ENCODE measurements at regions of chr6 and their contacts with region 1.

Region 1: GRCh38 chr6:13767121-13767808 is 47.1 kb downstream of the MCUR1 start:
- DNase-seq: peak; percentile 43 to 66
- ATAC-seq: peak; percentile 86 to 92
- H3K4me3 ChIP-seq: peak overlapping the region; percentile 20 to 39 (median 25)
- H3K27ac ChIP-seq: peak overlapping the region in 2 of 4 donors; percentile 8 to 60
- H3K4me1 ChIP-seq: peaks cover 3 to 7% of the 10 kb centered on the region in 2 donors
- H3K27me3 ChIP-seq: no peaks in the 10 kb centered on the region
- CTCF ChIP-seq: peak in 1 of 5 experiments; percentile 11
- POLR2A ChIP-seq: no peak

Region 2: DNA sequence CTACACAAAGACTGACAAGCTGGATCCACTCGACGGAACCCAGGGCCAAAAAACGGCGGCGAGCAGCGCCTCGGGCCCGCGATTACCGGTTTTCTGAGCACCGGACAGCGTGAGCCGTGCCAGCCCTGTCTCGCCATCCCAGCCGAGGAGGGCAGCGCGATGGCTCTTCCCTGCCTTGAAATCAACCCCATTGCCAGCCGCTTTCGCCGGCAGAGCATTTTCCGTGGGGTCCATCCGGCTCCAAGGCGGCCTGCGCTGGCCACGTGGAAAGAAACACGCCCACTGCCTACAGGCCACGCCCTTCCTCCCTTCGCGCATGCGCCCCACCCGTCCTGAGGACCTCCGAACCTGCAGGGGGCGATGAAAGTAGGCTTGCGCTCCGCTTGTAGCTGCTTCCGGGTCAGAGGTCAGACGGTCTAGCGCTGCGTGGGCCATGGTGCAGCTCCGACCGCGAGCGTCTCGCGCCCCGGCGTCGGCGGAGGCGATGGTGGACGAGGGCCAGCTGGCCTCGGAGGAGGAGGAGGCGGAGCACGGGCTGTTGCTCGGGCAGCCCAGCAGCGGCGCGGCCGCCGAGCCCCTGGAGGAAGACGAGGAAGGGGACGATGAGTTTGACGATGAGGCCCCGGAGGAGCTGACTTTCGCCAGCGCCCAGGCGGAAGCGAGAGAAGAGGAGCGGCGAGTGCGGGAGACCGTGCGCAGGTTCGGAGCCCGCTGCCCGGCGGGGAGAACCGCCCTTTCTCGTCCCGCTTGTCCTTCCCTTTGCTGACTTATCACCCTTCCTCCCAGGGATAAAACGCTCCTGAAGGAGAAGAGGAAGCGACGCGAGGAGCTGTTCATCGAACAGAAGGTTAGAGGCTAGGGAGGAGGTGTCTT is 152.1 kb before region 1 on chr6 and contains the start of gene NOL7:
- in situ Hi-C with region 1: loop called in 1 of 4 experiments (anchors 10 kb)
- intact Hi-C with region 1: loop called (anchors 1 kb)
- DNase-seq: peak; percentile 97 to 98
- ATAC-seq: peak; percentile 95 to 97
- H3K4me3 ChIP-seq: peak within 1 kb of the TSS; percentile 68 to 95 (median 78)
- H3K27ac ChIP-seq: peak within 1 kb of the TSS; percentile 84 to 91 (median 88)
- H3K4me1 ChIP-seq: peaks cover 21 to 34% of the 10 kb centered on the region in 2 donors
- H3K27me3 ChIP-seq: no peaks in the 10 kb centered on the region
- CTCF ChIP-seq: peak; percentile 88 to 93 (median 92)
- POLR2A ChIP-seq: peak; percentile 67 to 73
- total RNA-seq, gene NOL7: 44.9 to 69.0 (median 63.8) TPM

Region 3: DNA sequence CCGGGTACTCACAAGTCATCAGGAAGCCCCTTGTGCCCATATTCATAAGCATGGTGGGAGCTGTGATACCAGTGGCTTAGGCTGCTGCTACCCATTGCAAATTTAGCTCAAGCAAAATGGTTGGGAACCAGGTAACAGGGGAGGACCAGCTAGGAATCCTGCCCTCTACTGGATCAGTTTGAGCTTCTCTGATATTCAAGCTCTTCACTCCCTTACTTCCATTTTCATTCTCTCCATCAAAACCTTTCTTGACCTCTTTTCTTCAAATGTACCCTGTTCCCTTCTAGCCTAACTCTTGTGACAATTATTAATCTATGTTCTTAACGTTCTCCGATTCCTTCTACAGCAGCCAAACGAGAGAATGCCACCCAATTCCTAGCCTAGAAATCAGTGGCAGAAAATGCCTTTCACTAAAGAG is 142.4 kb before region 1 on chr6:
- in situ Hi-C with region 1: loop called in 1 of 4 experiments (anchors 25 kb)
- intact Hi-C with region 1: no loop called
- DNase-seq: no peak
- ATAC-seq: peak in 1 of 2 donors; percentile 64
- H3K4me3 ChIP-seq: no peak overlapping the region
- H3K27ac ChIP-seq: no peak overlapping the region
- H3K4me1 ChIP-seq: no peaks in the 10 kb centered on the region
- H3K27me3 ChIP-seq: no peaks in the 10 kb centered on the region
- CTCF ChIP-seq: peak in 2 of 5 experiments; percentile 14 to 34
- POLR2A ChIP-seq: no peak

Region 4: DNA sequence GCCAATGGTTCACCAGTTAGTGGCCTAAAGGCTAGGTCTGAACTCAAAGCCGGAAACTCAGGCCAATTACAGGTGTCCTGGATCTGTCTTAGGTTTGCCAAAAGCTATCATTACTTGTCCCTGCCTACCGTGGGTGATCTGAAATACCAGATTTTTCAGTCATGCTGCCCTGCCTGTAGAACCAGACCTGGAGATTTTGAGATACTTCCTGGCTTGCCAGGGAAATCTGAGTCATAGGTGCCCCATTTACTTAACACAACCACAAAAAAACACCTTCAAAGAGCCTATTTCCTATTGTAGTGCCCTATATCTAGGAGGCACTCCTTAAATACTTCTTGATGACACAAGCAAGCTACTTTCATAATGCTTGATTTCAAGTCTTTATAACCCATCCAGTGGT is 41.7 kb before region 1 on chr6:
- in situ Hi-C with region 1: no loop called
- intact Hi-C with region 1: no loop called
- DNase-seq: no peak
- ATAC-seq: no peak
- H3K4me3 ChIP-seq: no peak overlapping the region
- H3K27ac ChIP-seq: no peak overlapping the region
- H3K4me1 ChIP-seq: no peaks in the 10 kb centered on the region
- H3K27me3 ChIP-seq: no peaks in the 10 kb centered on the region
- CTCF ChIP-seq: no peak
- POLR2A ChIP-seq: no peak

Region 5: DNA sequence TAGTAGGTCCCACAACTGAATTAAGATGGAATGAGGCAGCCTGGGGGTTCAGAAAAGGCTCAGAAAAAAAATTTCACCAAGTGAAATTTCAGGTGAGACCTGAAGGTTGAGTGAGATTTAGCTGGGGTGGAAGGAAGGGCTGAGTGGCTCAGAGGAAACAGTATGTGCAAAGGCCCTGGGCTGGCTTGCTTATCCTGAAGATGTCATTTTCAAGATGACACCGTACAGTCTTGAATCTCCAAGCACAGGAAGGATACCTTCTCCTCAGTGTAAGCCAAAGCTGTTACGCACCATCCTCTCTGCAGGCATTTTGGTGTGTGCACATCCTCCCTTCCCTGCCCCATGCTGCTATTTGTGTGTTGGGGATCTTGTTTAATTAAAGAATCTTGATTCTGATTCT is 12.6 kb before region 1 on chr6:
- in situ Hi-C with region 1: no loop called
- intact Hi-C with region 1: loop called (anchors 2 kb)
- DNase-seq: no peak
- ATAC-seq: no peak
- H3K4me3 ChIP-seq: no peak overlapping the region
- H3K27ac ChIP-seq: no peak overlapping the region
- H3K4me1 ChIP-seq: no peaks in the 10 kb centered on the region
- H3K27me3 ChIP-seq: no peaks in the 10 kb centered on the region
- CTCF ChIP-seq: no peak
- POLR2A ChIP-seq: no peak

Region 6: DNA sequence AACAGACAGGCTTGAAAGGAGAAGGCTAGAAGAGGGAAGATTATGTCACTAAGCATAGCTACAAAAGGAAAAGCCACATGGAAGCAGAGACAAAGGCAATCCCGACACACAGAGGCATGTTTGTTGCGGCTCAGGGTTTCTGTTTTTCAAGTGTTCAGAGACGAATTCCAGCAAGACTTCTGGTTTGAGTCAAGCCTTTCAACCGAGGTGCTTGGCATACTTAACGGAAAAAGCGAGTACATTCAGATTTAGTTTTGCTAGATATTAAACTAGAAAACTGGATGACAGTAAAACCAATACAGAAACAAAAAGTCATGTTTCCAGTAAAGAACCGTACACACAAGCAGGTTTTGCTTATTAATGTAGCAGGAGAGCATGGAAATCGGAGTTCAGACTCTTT is 19.9 kb after region 1 on chr6:
- in situ Hi-C with region 1: no loop called
- intact Hi-C with region 1: no loop called
- DNase-seq: no peak
- ATAC-seq: no peak
- H3K4me3 ChIP-seq: no peak overlapping the region
- H3K27ac ChIP-seq: no peak overlapping the region
- H3K4me1 ChIP-seq: no peaks in the 10 kb centered on the region
- H3K27me3 ChIP-seq: no peaks in the 10 kb centered on the region
- CTCF ChIP-seq: no peak
- POLR2A ChIP-seq: no peak